ENCODE measurements at regions of chr5 and their contacts with region 1.

Region 1: GRCh38 chr5:135829681-135830383 is 4.6 kb upstream of the SLC25A48 start:
- DNase-seq: peak; percentile 76
- H3K4me3 ChIP-seq: no peak overlapping the region
- H3K27ac ChIP-seq: no peak overlapping the region
- H3K4me1 ChIP-seq: peaks cover 0 to 8% (median 4%) of the 10 kb centered on the region in 4 donors
- H3K27me3 ChIP-seq: peaks cover 45% of the 10 kb centered on the region
- CTCF ChIP-seq: peak; percentile 73 to 84 (median 77)
- EP300 ChIP-seq: no peak
- POLR2A ChIP-seq: no peak

Region 2: GRCh38 chr5:135466178-135467050 is 363.4 kb before region 1 on chr5:
- in situ Hi-C with region 1: loop called in 2 of 4 experiments (anchors 25 kb)
- intact Hi-C with region 1: no loop called
- DNase-seq: peak; percentile 73
- H3K4me3 ChIP-seq: peak overlapping the region in 1 of 4 donors; percentile 27
- H3K27ac ChIP-seq: no peak overlapping the region
- H3K4me1 ChIP-seq: peaks cover 0 to 9% (median 2%) of the 10 kb centered on the region in 4 donors
- H3K27me3 ChIP-seq: peaks cover 69% of the 10 kb centered on the region
- CTCF ChIP-seq: peak; percentile 60 to 83 (median 79)
- EP300 ChIP-seq: no peak
- POLR2A ChIP-seq: no peak

Region 3: DNA sequence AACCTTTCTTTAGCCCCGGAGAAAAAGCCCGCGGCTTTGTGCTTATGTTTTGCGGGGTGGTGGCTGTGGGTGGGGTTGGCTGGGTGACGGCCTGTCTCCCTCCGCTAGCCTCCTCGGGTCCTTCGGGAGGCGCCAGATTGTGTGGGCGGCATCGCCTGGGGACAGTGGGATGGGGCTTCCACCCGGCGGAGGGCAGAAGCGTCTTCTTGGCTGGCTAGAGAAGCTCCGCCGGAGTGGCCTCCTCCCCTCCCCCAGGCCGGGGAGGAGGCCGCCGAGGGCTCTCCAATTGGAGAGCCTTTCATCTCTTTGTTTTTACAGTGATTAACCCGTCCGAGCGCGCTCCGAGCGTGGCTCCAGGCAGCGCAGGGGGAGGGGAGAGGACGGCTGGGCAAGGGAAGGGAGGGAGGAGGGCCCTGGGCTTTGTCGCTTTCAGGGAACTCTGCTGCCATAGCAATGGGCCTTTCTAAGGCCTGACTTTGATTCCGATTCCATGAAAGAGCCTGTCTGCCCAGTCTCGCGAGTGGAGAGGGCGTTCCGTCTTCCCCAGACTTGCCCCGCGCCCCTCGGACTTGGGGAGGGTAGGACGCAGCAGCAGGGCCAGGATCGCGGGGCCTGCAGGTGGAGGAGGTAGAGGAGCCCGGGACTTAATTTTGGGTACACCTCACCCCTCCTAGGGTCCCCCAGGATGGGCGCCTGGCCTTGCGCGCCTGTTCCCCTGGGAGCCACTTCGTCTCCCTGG is 340.9 kb before region 1 on chr5:
- in situ Hi-C with region 1: no loop called
- intact Hi-C with region 1: loop called (anchors 10 kb)
- DNase-seq: no peak
- H3K4me3 ChIP-seq: peak overlapping the region; percentile 9 to 39 (median 14)
- H3K27ac ChIP-seq: no peak overlapping the region
- H3K4me1 ChIP-seq: peaks cover 0 to 25% (median 16%) of the 10 kb centered on the region in 4 donors
- H3K27me3 ChIP-seq: peaks cover 89% of the 10 kb centered on the region
- CTCF ChIP-seq: no peak
- EP300 ChIP-seq: no peak
- POLR2A ChIP-seq: no peak

Region 4: GRCh38 chr5:135551593-135552447 is 278.0 kb before region 1 on chr5:
- in situ Hi-C with region 1: loop called (anchors 5 to 10 kb)
- intact Hi-C with region 1: no loop called
- DNase-seq: peak; percentile 67
- H3K4me3 ChIP-seq: no peak overlapping the region
- H3K27ac ChIP-seq: no peak overlapping the region
- H3K4me1 ChIP-seq: no peaks in the 10 kb centered on the region
- H3K27me3 ChIP-seq: peaks cover 44% of the 10 kb centered on the region
- CTCF ChIP-seq: peak; percentile 72 to 88 (median 80)
- EP300 ChIP-seq: no peak
- POLR2A ChIP-seq: no peak

Region 5: GRCh38 chr5:135560858-135561257 is 269.0 kb before region 1 on chr5:
- in situ Hi-C with region 1: loop called (anchors 5 to 10 kb)
- intact Hi-C with region 1: loop called (anchors 5 kb)
- DNase-seq: peak; percentile 79
- H3K4me3 ChIP-seq: no peak overlapping the region
- H3K27ac ChIP-seq: no peak overlapping the region
- H3K4me1 ChIP-seq: no peaks in the 10 kb centered on the region
- H3K27me3 ChIP-seq: peaks cover 29% of the 10 kb centered on the region
- CTCF ChIP-seq: peak; percentile 74 to 83 (median 76)
- EP300 ChIP-seq: no peak
- POLR2A ChIP-seq: no peak

Region 6: DNA sequence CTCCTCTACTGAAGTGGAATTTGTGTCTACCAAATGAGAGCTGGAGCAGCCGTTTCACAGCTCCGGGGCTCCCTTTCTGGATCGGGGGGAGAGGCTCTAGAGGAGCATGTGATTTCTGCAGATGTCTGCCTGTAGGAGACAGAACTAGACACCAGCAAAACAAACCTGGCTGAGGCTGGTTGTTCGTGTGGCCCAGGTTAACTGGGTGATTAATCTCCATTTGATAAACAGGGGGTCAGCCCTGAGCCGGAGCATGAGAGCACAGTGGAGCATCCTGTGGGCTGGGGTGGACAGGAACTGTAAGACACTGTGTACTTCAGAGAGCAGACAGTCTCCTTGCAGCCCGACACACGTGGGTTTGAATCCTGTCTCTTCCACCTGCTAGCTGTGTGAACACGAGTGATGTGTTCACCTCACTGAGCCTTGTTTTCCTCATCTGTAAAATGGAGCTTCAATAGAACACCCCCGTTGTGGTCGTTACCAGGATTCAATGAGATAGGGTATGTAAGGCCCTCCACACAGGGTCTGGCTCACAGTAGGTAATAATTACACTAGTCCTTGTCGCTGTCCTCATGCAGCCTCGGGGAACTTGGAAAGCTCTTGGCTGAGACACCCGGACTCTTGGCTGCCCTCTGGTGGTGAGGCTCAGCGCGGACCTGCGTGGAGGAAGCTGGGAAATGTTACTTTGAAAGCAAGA is 264.0 kb before region 1 on chr5:
- in situ Hi-C with region 1: no loop called
- intact Hi-C with region 1: loop called (anchors 5 kb)
- DNase-seq: peak; percentile 76
- H3K4me3 ChIP-seq: no peak overlapping the region
- H3K27ac ChIP-seq: no peak overlapping the region
- H3K4me1 ChIP-seq: no peaks in the 10 kb centered on the region
- H3K27me3 ChIP-seq: peaks cover 6% of the 10 kb centered on the region
- CTCF ChIP-seq: peak; percentile 69 to 91 (median 79)
- EP300 ChIP-seq: no peak
- POLR2A ChIP-seq: no peak